Activated CD4-positive, alpha-beta T cell treated with anti-CD3 and anti-CD28 coated beads for 36 hours (primary cell): ENCODE measurements at regions of chr18 and their contacts with region 1.

Region 1: DNA sequence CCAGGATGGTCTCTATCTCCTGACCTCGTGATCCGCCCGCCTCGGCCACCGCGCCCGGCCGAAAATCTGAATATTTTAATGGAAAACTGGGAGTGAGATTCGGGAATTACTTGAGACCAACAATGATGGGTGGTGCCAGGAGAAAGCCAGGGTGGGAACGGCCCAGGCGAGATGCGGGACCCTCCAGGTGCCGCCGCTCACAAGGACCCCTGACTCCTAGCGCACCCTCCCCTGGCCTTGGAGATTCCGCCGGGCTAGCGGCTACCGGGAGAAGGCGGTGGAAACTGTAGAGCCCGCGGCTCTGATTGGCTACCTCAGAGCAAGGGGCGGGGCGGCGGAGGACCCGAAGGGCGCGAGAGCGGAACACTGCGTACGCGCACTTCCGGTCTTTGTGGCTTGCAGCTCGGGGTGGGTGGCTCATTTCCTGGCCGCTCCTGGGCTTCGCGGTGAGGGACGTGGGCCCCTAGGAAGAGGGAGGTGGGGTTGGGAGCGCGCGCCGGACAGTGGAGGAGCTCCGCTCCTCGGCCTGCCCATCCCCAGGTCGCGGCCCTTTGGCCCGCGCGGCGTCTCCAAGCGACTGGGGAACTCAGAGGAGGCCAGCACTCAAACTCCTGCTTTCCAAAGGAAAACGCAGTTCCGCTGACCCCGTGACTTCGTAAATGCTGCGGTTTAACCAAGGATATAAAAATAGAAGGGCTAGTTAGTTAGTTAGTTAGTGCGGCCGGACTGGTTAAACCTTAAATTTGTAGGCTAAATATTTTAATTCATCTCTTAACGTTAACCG is at the start of gene ZNF397:
- DNase-seq: peak; percentile 98
- ATAC-seq: peak; percentile 98
- H3K4me3 Mint-ChIP-seq: peak within 1 kb of the TSS; percentile 97
- H3K27ac Mint-ChIP-seq: peak within 1 kb of the TSS; percentile 97
- H3K4me1 Mint-ChIP-seq: peaks cover 31% of the 10 kb centered on the region
- H3K27me3 Mint-ChIP-seq: no peaks in the 10 kb centered on the region
- total RNA-seq, gene ZNF397: 21.3 to 21.9 TPM

Region 2: DNA sequence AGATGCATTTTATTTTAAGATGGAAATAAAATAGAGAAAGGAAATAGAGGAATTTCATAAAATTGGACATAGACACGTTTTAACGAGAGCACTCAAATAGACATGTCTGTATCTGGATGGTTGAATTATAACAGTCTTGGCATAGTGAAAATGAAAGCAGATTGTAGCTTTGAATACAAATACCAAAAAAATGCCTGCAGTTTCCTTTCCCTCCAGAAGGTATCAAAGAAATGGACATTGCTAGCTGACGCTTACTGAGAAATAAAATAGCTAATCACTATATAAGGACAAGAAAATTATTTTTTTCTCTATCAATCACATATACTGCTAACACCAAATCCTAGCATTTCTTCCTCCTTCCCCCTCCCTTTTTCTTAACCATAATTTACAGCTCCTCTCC is 211.1 kb before region 1 on chr18:
- CTCF ChIA-PET with region 1: no interaction called
- POLR2A ChIA-PET with region 1: no interaction called
- intact Hi-C with region 1: loop called (anchors 5 kb)
- DNase-seq: no peak
- ATAC-seq: peak; percentile 67
- H3K4me3 Mint-ChIP-seq: peak overlapping the region; percentile 69
- H3K27ac Mint-ChIP-seq: peak overlapping the region; percentile 96
- H3K4me1 Mint-ChIP-seq: peaks cover 61% of the 10 kb centered on the region
- H3K27me3 Mint-ChIP-seq: no peaks in the 10 kb centered on the region

Region 3: DNA sequence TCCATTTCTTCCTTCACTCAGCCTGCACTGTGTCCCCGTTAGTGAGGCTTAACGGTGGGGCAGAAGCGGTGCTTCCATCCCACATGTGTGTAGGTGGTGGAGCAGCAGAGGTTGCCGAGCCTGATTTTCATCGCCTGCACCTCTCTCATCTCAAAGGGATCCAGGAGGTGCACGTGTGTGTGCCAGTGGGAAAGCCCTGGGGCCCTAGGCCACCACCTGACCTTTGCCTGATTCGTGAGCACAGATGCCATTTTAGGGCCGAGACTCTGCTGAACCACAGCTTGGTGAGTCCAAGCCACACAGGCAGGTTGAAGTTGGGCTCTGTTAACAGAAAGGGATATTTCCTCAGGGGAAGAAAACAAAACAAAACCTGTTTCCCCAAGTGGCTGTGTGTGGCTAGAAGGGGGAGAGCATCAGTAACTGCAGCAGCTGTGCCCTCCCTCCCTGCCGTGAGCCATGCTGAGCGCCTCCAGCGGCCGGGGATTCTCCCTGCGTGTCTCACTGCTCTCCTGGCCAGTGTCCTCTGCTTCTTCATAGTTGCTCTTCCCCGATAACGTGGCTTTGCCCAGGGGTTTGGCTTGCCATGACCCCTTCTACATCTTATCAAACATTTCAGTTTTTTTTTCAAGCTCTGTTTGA is 118.2 kb before region 1 on chr18:
- CTCF ChIA-PET with region 1: no interaction called
- POLR2A ChIA-PET with region 1: no interaction called
- intact Hi-C with region 1: no loop called
- DNase-seq: peak; percentile 66
- ATAC-seq: peak; percentile 86
- H3K4me3 Mint-ChIP-seq: peak overlapping the region; percentile 25
- H3K27ac Mint-ChIP-seq: peak overlapping the region; percentile 59
- H3K4me1 Mint-ChIP-seq: peaks cover 17% of the 10 kb centered on the region
- H3K27me3 Mint-ChIP-seq: no peaks in the 10 kb centered on the region

Region 4: GRCh38 chr18:35290073-35290735 is 49.3 kb after region 1 on chr18 and contains the start of gene ZSCAN30:
- CTCF ChIA-PET with region 1: no interaction called
- POLR2A ChIA-PET with region 1: no interaction called
- intact Hi-C with region 1: loop called (anchors 1 kb)
- DNase-seq: peak; percentile 97
- ATAC-seq: peak; percentile 97
- H3K4me3 Mint-ChIP-seq: peak within 1 kb of the TSS; percentile 96
- H3K27ac Mint-ChIP-seq: peak within 1 kb of the TSS; percentile 96
- H3K4me1 Mint-ChIP-seq: peaks cover 45% of the 10 kb centered on the region
- H3K27me3 Mint-ChIP-seq: no peaks in the 10 kb centered on the region
- total RNA-seq, gene ZSCAN30: 24.2 to 25.4 TPM

Region 5: DNA sequence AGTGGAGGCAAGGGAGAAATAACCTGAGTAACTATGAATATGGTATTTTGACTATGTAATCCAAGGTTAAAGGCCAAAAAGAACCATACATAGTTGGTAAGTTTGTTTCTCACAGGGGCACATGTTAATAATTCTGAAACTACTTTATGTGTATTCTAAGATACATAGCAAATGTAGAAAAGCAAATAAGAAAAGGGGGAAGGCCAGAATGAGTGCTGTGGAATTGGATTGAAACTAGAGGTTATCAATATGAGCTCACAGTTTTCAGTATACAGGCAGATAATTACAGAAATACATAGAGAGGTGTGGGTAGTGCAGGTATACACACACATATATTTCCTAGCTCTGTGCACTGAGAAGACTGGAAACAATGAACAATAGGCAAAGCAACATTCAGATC is 243.2 kb after region 1 on chr18:
- CTCF ChIA-PET with region 1: no interaction called
- POLR2A ChIA-PET with region 1: no interaction called
- intact Hi-C with region 1: loop called in 1 of 2 experiments (anchors 5 kb)
- DNase-seq: no peak
- ATAC-seq: peak; percentile 95
- H3K4me3 Mint-ChIP-seq: no peak overlapping the region
- H3K27ac Mint-ChIP-seq: no peak overlapping the region
- H3K4me1 Mint-ChIP-seq: peaks cover 47% of the 10 kb centered on the region
- H3K27me3 Mint-ChIP-seq: no peaks in the 10 kb centered on the region

Region 6: GRCh38 chr18:35616664-35617423 is 376.0 kb after region 1 on chr18:
- CTCF ChIA-PET with region 1: no interaction called
- POLR2A ChIA-PET with region 1: interaction called, 4 read pairs
- intact Hi-C with region 1: loop called in 1 of 2 experiments (anchors 5 kb)
- DNase-seq: peak; percentile 81
- ATAC-seq: peak; percentile 94
- H3K4me3 Mint-ChIP-seq: no peak overlapping the region
- H3K27ac Mint-ChIP-seq: no peak overlapping the region
- H3K4me1 Mint-ChIP-seq: peaks cover 16% of the 10 kb centered on the region
- H3K27me3 Mint-ChIP-seq: no peaks in the 10 kb centered on the region

Region 7: GRCh38 chr18:36129300-36130038 is 888.6 kb after region 1 on chr18 and contains the starts of genes ELP2 and SLC39A6:
- CTCF ChIA-PET with region 1: no interaction called
- POLR2A ChIA-PET with region 1: no interaction called
- intact Hi-C with region 1: loop called in 1 of 2 experiments (anchors 1 kb)
- DNase-seq: peak; percentile 97
- ATAC-seq: peak; percentile 94
- H3K4me3 Mint-ChIP-seq: peak within 1 kb of the TSS; percentile 92
- H3K27ac Mint-ChIP-seq: peak within 1 kb of the TSS; percentile 95
- H3K4me1 Mint-ChIP-seq: peaks cover 57% of the 10 kb centered on the region
- H3K27me3 Mint-ChIP-seq: no peaks in the 10 kb centered on the region
- total RNA-seq, gene ELP2: 76.5 to 114 TPM
- total RNA-seq, gene SLC39A6: 23.9 to 28.6 TPM